ENCODE measurements at regions of chr5 and their contacts with region 1.

Region 1: GRCh38 chr5:163760498-163760897 is 255.1 kb downstream of the MAT2B start:
- DNase-seq: peak; percentile 99
- H3K4me3 ChIP-seq: peak overlapping the region in 1 of 3 experiments; percentile 2
- H3K27ac ChIP-seq: peak overlapping the region; percentile 95
- H3K4me1 ChIP-seq: peaks cover 47% of the 10 kb centered on the region
- H3K27me3 ChIP-seq: no peaks in the 10 kb centered on the region
- CTCF ChIP-seq: no peak
- POLR2A ChIP-seq: peak; percentile 74

Region 2: GRCh38 chr5:163459922-163460766 is 300.4 kb before region 1 on chr5 and contains the starts of genes HMMR and NUDCD2:
- CTCF ChIA-PET with region 1: no interaction called
- POLR2A ChIA-PET with region 1: interaction called, 4 read pairs
- dilution Hi-C with region 1: no loop called
- intact Hi-C with region 1: loop called (anchors 2 kb)
- DNase-seq: peak; percentile 99
- H3K4me3 ChIP-seq: peak within 1 kb of the TSS; percentile 85 to 96 (median 92)
- H3K27ac ChIP-seq: peak within 1 kb of the TSS; percentile 99
- H3K4me1 ChIP-seq: peaks cover 21% of the 10 kb centered on the region
- H3K27me3 ChIP-seq: no peaks in the 10 kb centered on the region
- CTCF ChIP-seq: peak in 1 of 2 donors; percentile 11
- POLR2A ChIP-seq: peak; percentile 95
- total RNA-seq, gene HMMR: 26.0 and 31.0 TPM in 2 replicates
- total RNA-seq, gene NUDCD2: 46.9 and 50.3 TPM in 2 replicates

Region 3: GRCh38 chr5:163595932-163596607 is 164.4 kb before region 1 on chr5:
- CTCF ChIA-PET with region 1: no interaction called
- POLR2A ChIA-PET with region 1: no interaction called
- dilution Hi-C with region 1: no loop called
- intact Hi-C with region 1: no loop called
- DNase-seq: no peak
- H3K4me3 ChIP-seq: no peak overlapping the region
- H3K27ac ChIP-seq: no peak overlapping the region
- H3K4me1 ChIP-seq: no peaks in the 10 kb centered on the region
- H3K27me3 ChIP-seq: no peaks in the 10 kb centered on the region
- CTCF ChIP-seq: no peak
- POLR2A ChIP-seq: no peak

Region 4: GRCh38 chr5:163706053-163706771 is 54.3 kb before region 1 on chr5:
- CTCF ChIA-PET with region 1: interaction called, 10 read pairs
- POLR2A ChIA-PET with region 1: interaction called, 12 read pairs
- dilution Hi-C with region 1: no loop called
- intact Hi-C with region 1: loop called (anchors 1 kb)
- DNase-seq: peak; percentile 83
- H3K4me3 ChIP-seq: no peak overlapping the region
- H3K27ac ChIP-seq: peak overlapping the region; percentile 96
- H3K4me1 ChIP-seq: peaks cover 34% of the 10 kb centered on the region
- H3K27me3 ChIP-seq: no peaks in the 10 kb centered on the region
- CTCF ChIP-seq: no peak
- POLR2A ChIP-seq: no peak

Region 5: GRCh38 chr5:163861670-163862069 is 101.2 kb after region 1 on chr5:
- CTCF ChIA-PET with region 1: interaction called, 5 read pairs
- POLR2A ChIA-PET with region 1: interaction called, 3 read pairs
- dilution Hi-C with region 1: loop called (anchors 25 kb)
- intact Hi-C with region 1: loop called (anchors 1 kb)
- DNase-seq: peak; percentile 91
- H3K4me3 ChIP-seq: no peak overlapping the region
- H3K27ac ChIP-seq: peak overlapping the region; percentile 84
- H3K4me1 ChIP-seq: peaks cover 41% of the 10 kb centered on the region
- H3K27me3 ChIP-seq: no peaks in the 10 kb centered on the region
- CTCF ChIP-seq: no peak
- POLR2A ChIP-seq: no peak

Region 6: GRCh38 chr5:163968651-163969050 is 208.2 kb after region 1 on chr5:
- CTCF ChIA-PET with region 1: no interaction called
- POLR2A ChIA-PET with region 1: no interaction called
- dilution Hi-C with region 1: no loop called
- intact Hi-C with region 1: loop called (anchors 1 kb)
- DNase-seq: peak; percentile 14
- H3K4me3 ChIP-seq: no peak overlapping the region
- H3K27ac ChIP-seq: peak overlapping the region; percentile 35
- H3K4me1 ChIP-seq: peaks cover 8% of the 10 kb centered on the region
- H3K27me3 ChIP-seq: no peaks in the 10 kb centered on the region
- CTCF ChIP-seq: no peak
- POLR2A ChIP-seq: no peak

Region 7: DNA sequence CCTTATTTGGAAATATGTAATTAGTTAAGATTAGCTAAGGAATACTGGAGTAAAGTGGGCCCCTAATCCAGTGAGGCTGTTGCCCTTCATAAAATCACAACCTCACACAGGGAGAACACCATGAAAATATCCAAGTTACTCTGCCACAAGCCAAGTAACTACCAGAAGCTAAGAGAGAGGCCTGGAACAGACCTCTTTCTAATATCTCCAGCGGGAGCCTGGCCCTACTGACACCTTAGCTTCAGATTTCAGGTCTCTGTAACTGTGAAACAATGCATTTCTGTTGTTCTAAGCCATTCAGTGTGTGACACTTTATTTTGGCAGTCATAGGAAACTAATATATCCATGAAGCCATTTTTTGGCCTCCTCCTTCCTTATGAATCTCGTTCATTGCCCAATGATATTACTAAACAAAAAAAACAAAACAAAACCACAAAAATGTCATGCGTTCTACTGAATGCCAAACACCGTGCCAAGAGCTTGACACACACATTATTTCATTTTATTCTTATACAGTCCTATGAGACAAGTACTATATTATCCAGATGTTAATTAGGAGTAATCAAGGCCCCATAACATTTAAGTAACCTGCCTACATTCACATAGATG is 443.9 kb after region 1 on chr5:
- CTCF ChIA-PET with region 1: no interaction called
- POLR2A ChIA-PET with region 1: no interaction called
- dilution Hi-C with region 1: no loop called
- intact Hi-C with region 1: loop called (anchors 10 kb)
- DNase-seq: peak; percentile 50
- H3K4me3 ChIP-seq: no peak overlapping the region
- H3K27ac ChIP-seq: peak overlapping the region; percentile 87
- H3K4me1 ChIP-seq: peaks cover 28% of the 10 kb centered on the region
- H3K27me3 ChIP-seq: no peaks in the 10 kb centered on the region
- CTCF ChIP-seq: no peak
- POLR2A ChIP-seq: no peak

Measured in endothelial cell of umbilical vein (primary cell).